ENCODE measurements at regions of chr11 and their contacts with region 1.

Region 1: DNA sequence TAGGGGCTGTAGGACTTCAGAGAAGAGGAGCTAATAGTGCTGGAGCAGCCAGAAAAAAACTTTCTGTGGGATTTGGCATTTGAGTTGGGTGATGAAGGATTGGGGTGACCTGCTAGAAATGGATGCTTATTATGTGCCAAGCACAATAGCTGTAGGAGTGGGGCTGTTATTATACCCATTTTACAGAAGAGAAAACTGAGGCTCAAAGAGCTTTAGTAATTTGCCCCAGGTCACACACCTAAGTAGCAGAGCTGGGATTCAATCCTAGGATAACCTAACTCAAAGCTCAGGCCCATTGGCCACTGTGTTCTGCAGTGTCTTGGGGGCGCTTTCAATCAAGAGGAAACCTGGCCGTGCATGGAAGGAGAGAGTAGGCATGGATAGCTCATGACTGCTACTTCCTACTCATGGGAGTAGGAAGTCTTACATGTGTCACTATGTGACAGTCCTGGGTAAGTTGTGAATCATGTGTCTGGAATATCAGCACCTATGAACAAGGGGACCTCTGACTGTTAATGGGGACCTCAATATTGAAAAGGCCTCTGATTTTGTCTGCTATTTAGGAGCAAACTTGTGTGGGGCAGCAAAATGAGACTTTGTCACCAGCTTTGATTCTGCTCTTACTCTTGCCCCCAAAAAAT is 6.1 kb upstream of the ELF5 start:
- DNase-seq: no peak
- ATAC-seq: no peak
- H3K4me3 ChIP-seq: no peak overlapping the region
- H3K4me3 Mint-ChIP-seq: no peak overlapping the region
- H3K27ac ChIP-seq: no peak overlapping the region
- H3K27ac Mint-ChIP-seq: no peak overlapping the region
- H3K4me1 ChIP-seq: no peaks in the 10 kb centered on the region
- H3K4me1 Mint-ChIP-seq: no peaks in the 10 kb centered on the region
- H3K27me3 ChIP-seq: peaks cover 0 to 5% (median 0%) of the 10 kb centered on the region in 4 experiments
- H3K27me3 Mint-ChIP-seq: peaks cover 13% of the 10 kb centered on the region
- CTCF ChIP-seq: no peak

Region 2: DNA sequence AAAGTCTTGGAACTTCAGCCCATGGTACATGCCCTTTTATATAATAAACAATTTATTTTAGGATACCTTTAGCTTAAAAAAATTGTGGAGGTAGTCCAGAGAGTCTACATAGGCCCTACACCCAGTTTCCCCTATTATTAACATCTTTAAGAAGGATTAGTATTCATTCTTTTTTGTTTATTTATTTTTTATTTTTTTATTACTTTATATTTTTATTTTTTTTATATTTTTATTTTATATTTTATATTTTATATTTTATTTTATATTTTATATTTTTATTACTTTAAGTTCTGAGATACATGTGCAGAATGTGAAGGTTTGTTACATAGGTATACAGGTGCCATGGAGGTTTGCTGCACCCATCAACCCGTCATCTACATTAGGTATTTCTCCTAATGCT is 146.0 kb before region 1 on chr11:
- CTCF ChIA-PET with region 1: no interaction called
- POLR2A ChIA-PET with region 1: no interaction called
- intact Hi-C with region 1: no loop called
- DNase-seq: no peak
- ATAC-seq: no peak
- H3K4me3 ChIP-seq: no peak overlapping the region
- H3K4me3 Mint-ChIP-seq: no peak overlapping the region
- H3K27ac ChIP-seq: no peak overlapping the region
- H3K27ac Mint-ChIP-seq: no peak overlapping the region
- H3K4me1 ChIP-seq: no peaks in the 10 kb centered on the region
- H3K4me1 Mint-ChIP-seq: no peaks in the 10 kb centered on the region
- H3K27me3 ChIP-seq: no peaks in the 10 kb centered on the region
- H3K27me3 Mint-ChIP-seq: peaks cover 11% of the 10 kb centered on the region
- CTCF ChIP-seq: no peak

Region 3: GRCh38 chr11:34696862-34697261 is 177.1 kb after region 1 on chr11:
- CTCF ChIA-PET with region 1: no interaction called
- POLR2A ChIA-PET with region 1: no interaction called
- intact Hi-C with region 1: no loop called
- DNase-seq: no peak
- ATAC-seq: no peak
- H3K4me3 ChIP-seq: no peak overlapping the region
- H3K4me3 Mint-ChIP-seq: no peak overlapping the region
- H3K27ac ChIP-seq: no peak overlapping the region
- H3K27ac Mint-ChIP-seq: no peak overlapping the region
- H3K4me1 ChIP-seq: no peaks in the 10 kb centered on the region
- H3K4me1 Mint-ChIP-seq: no peaks in the 10 kb centered on the region
- H3K27me3 ChIP-seq: no peaks in the 10 kb centered on the region
- H3K27me3 Mint-ChIP-seq: peaks cover 25% of the 10 kb centered on the region
- CTCF ChIP-seq: no peak

Region 4: GRCh38 chr11:35419184-35419829 is 899.6 kb after region 1 on chr11 and contains the start of gene SLC1A2:
- CTCF ChIA-PET with region 1: no interaction called
- POLR2A ChIA-PET with region 1: no interaction called
- intact Hi-C with region 1: loop called (anchors 5 kb)
- DNase-seq: peak; percentile 23
- ATAC-seq: no peak
- H3K4me3 ChIP-seq: peak within 1 kb of the TSS in 2 of 5 experiments; percentile 29 to 51
- H3K4me3 Mint-ChIP-seq: peak within 1 kb of the TSS; percentile 77
- H3K27ac ChIP-seq: no peak within 1 kb of the TSS
- H3K27ac Mint-ChIP-seq: no peak within 1 kb of the TSS
- H3K4me1 ChIP-seq: peaks cover 19 to 23% of the 10 kb centered on the region in 2 donors
- H3K4me1 Mint-ChIP-seq: peaks cover 13% of the 10 kb centered on the region
- H3K27me3 ChIP-seq: peaks cover 0 to 55% (median 38%) of the 10 kb centered on the region in 4 experiments
- H3K27me3 Mint-ChIP-seq: peaks cover 79% of the 10 kb centered on the region
- CTCF ChIP-seq: no peak
- total RNA-seq, gene SLC1A2: not detected in 2 replicates